CD4-positive, alpha-beta T cell (primary cell): ENCODE measurements at regions of chr6 and their contacts with region 1.

Region 1: GRCh38 chr6:8006208-8006607 is 58.0 kb downstream of the BLOC1S5 start:
- DNase-seq: peak in 4 of 14 experiments; percentile 4 to 32 (median 14)
- ATAC-seq: no peak
- H3K4me3 ChIP-seq: no peak overlapping the region
- H3K4me3 Mint-ChIP-seq: no peak overlapping the region
- H3K27ac ChIP-seq: no peak overlapping the region
- H3K27ac Mint-ChIP-seq: no peak overlapping the region
- H3K4me1 ChIP-seq: no peaks in the 10 kb centered on the region
- H3K4me1 Mint-ChIP-seq: peaks cover 6% of the 10 kb centered on the region
- H3K27me3 ChIP-seq: no peaks in the 10 kb centered on the region
- H3K27me3 Mint-ChIP-seq: no peaks in the 10 kb centered on the region
- CTCF ChIP-seq: peak; percentile 62

Region 2: GRCh38 chr6:7270320-7271204 is 735.6 kb before region 1 on chr6:
- CTCF ChIA-PET with region 1: no interaction called
- POLR2A ChIA-PET with region 1: no interaction called
- intact Hi-C with region 1: loop called (anchors 5 to 10 kb)
- DNase-seq: no peak
- ATAC-seq: no peak
- H3K4me3 ChIP-seq: no peak overlapping the region
- H3K4me3 Mint-ChIP-seq: no peak overlapping the region
- H3K27ac ChIP-seq: no peak overlapping the region
- H3K27ac Mint-ChIP-seq: no peak overlapping the region
- H3K4me1 ChIP-seq: no peaks in the 10 kb centered on the region
- H3K4me1 Mint-ChIP-seq: no peaks in the 10 kb centered on the region
- H3K27me3 ChIP-seq: no peaks in the 10 kb centered on the region
- H3K27me3 Mint-ChIP-seq: no peaks in the 10 kb centered on the region
- CTCF ChIP-seq: no peak

Region 3: GRCh38 chr6:7276199-7276524 is 730.0 kb before region 1 on chr6:
- CTCF ChIA-PET with region 1: no interaction called
- POLR2A ChIA-PET with region 1: no interaction called
- intact Hi-C with region 1: loop called (anchors 5 to 10 kb)
- DNase-seq: no peak
- ATAC-seq: no peak
- H3K4me3 ChIP-seq: no peak overlapping the region
- H3K4me3 Mint-ChIP-seq: no peak overlapping the region
- H3K27ac ChIP-seq: no peak overlapping the region
- H3K27ac Mint-ChIP-seq: no peak overlapping the region
- H3K4me1 ChIP-seq: peaks cover 2% of the 10 kb centered on the region
- H3K4me1 Mint-ChIP-seq: peaks cover 2% of the 10 kb centered on the region
- H3K27me3 ChIP-seq: no peaks in the 10 kb centered on the region
- H3K27me3 Mint-ChIP-seq: no peaks in the 10 kb centered on the region
- CTCF ChIP-seq: peak; percentile 36

Region 4: DNA sequence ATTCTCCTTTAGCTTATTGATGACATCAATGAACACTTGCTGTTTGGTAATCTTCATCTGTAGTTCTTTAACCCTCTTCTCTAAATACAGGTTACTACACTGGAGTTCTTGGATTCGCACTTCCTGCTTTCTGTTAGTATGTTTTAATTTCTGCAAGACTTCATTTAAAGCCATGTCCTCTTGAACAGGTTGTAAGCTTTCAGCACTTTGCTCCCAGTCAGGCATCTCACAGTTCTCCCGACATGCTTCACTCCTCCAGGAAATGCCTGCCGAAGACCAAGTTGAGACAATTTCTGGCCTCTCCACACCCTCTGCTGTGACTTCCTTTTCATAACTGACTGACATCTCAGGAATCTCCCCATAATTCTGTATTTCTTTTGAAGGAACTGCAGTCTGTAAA is 632.5 kb before region 1 on chr6:
- CTCF ChIA-PET with region 1: no interaction called
- POLR2A ChIA-PET with region 1: no interaction called
- intact Hi-C with region 1: no loop called
- DNase-seq: no peak
- ATAC-seq: no peak
- H3K4me3 ChIP-seq: no peak overlapping the region
- H3K4me3 Mint-ChIP-seq: no peak overlapping the region
- H3K27ac ChIP-seq: no peak overlapping the region
- H3K27ac Mint-ChIP-seq: no peak overlapping the region
- H3K4me1 ChIP-seq: no peaks in the 10 kb centered on the region
- H3K4me1 Mint-ChIP-seq: no peaks in the 10 kb centered on the region
- H3K27me3 ChIP-seq: no peaks in the 10 kb centered on the region
- H3K27me3 Mint-ChIP-seq: peaks cover 3% of the 10 kb centered on the region
- CTCF ChIP-seq: no peak

Region 5: DNA sequence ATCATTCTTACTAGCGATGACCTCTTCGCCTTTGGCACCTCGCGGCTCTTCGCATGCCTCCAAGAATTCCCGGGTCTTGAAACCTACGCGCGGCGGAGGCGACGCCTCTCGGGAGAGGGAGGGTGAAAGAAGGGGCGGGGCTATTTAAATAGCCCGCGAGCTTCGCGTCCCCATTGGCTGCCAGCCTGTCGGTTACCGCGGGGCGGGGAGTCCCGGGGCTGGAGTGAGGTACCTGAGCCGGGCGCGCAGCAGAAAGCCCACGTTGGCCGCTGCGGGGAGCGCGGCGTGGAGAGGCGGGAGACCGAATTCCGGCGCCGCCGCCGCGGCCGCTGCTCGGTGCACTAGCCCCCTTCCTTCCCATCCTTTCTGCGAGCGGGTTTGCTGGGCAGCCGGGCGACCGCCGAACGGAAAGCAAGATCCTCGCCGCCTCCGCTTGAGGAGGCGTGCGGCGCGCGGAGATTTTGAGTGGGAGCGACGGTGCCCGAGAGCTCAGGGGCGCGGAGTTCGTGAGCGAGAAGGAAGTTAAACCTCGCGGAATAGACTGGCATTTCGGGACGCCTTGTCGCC is 280.3 kb before region 1 on chr6 and contains the start of gene BMP6:
- CTCF ChIA-PET with region 1: no interaction called
- POLR2A ChIA-PET with region 1: no interaction called
- intact Hi-C with region 1: loop called (anchors 5 kb)
- DNase-seq: peak in 12 of 14 experiments; percentile 5 to 68 (median 40)
- ATAC-seq: peak; percentile 77
- H3K4me3 ChIP-seq: peak within 1 kb of the TSS; percentile 34
- H3K4me3 Mint-ChIP-seq: peak within 1 kb of the TSS; percentile 83
- H3K27ac ChIP-seq: no peak within 1 kb of the TSS
- H3K27ac Mint-ChIP-seq: no peak within 1 kb of the TSS
- H3K4me1 ChIP-seq: peaks cover 28% of the 10 kb centered on the region
- H3K4me1 Mint-ChIP-seq: peaks cover 11% of the 10 kb centered on the region
- H3K27me3 ChIP-seq: peaks cover 53 to 54% of the 10 kb centered on the region in 2 experiments
- H3K27me3 Mint-ChIP-seq: peaks cover 80% of the 10 kb centered on the region
- CTCF ChIP-seq: no peak
- total RNA-seq, gene BMP6: not detected